ENCODE measurements at regions of chr7 and their contacts with region 1.

Region 1: GRCh38 chr7:130486114-130486958 is 5.5 kb upstream of the MEST start:
- DNase-seq: peak; percentile 34 to 73 (median 56)
- ATAC-seq: peak; percentile 88
- H3K4me3 ChIP-seq: peak overlapping the region; percentile 80
- H3K4me3 Mint-ChIP-seq: peak overlapping the region; percentile 85 to 94 (median 91)
- H3K27ac ChIP-seq: peak overlapping the region; percentile 41
- H3K27ac Mint-ChIP-seq: peak overlapping the region in 5 of 9 donors; percentile 58 to 88 (median 73)
- H3K4me1 ChIP-seq: peaks cover 7 to 9% of the 10 kb centered on the region in 2 donors
- H3K4me1 Mint-ChIP-seq: peaks cover 22 to 32% (median 25%) of the 10 kb centered on the region in 7 donors
- H3K27me3 ChIP-seq: no peaks in the 10 kb centered on the region
- H3K27me3 Mint-ChIP-seq: peaks cover 5 to 66% (median 31%) of the 10 kb centered on the region in 5 donors

Region 2: DNA sequence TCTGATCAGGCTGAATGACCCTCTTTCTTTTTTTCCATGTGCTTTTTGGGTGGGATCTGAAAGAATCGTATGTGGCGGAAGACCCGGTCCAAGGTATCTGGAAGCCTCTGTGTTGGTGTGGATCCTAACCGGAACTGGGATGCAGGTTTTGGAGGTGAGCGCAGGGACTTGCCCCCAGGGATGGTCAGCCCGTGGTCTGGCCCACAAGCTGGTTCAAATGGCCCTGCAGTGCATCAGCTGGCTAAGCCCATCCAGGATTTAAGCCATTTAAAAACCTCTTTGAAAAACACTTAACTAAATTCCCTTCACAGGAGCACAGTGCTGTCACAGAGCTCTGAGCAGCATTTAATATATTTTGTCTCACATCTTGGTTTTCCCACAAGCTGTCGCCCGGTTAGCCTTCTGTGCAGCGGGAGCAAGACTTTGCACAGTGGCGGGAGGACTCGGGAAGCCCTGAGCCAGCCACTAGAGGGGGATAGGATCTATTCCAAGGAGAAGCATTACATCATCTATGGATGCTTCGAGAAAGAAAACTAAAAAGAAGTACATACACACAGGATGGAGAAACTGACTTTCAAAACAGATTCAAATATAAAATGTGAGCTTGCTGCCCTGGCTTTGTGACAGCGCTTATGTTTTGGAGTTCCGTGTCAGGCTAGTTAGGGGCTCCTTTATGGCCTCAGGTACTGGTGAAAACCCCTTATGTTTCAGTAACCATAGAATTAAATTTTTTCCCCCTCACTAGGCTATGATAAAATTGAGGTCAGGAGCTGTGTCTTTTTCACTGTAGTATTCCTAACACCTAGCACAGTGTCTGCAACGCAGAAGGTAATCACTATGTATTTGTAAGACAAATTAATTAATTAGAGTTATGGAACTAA is 208.3 kb before region 1 on chr7:
- CTCF ChIA-PET with region 1: no interaction called
- POLR2A ChIA-PET with region 1: no interaction called
- intact Hi-C with region 1: no loop called
- DNase-seq: no peak
- ATAC-seq: no peak
- H3K4me3 ChIP-seq: no peak overlapping the region
- H3K4me3 Mint-ChIP-seq: no peak overlapping the region
- H3K27ac ChIP-seq: no peak overlapping the region
- H3K27ac Mint-ChIP-seq: peak overlapping the region in 1 of 9 donors; percentile 56
- H3K4me1 ChIP-seq: peaks cover 0 to 5% of the 10 kb centered on the region in 2 donors
- H3K4me1 Mint-ChIP-seq: peaks cover 0 to 24% (median 12%) of the 10 kb centered on the region in 7 donors
- H3K27me3 ChIP-seq: no peaks in the 10 kb centered on the region
- H3K27me3 Mint-ChIP-seq: peaks cover 0 to 6% (median 0%) of the 10 kb centered on the region in 5 donors

Region 3: GRCh38 chr7:130421684-130422083 is 64.7 kb before region 1 on chr7:
- CTCF ChIA-PET with region 1: no interaction called
- POLR2A ChIA-PET with region 1: no interaction called
- intact Hi-C with region 1: loop called (anchors 2 to 10 kb)
- DNase-seq: no peak
- ATAC-seq: no peak
- H3K4me3 ChIP-seq: no peak overlapping the region
- H3K4me3 Mint-ChIP-seq: peak overlapping the region in 9 of 10 donors; percentile 10 to 75 (median 64)
- H3K27ac ChIP-seq: peak overlapping the region; percentile 23
- H3K27ac Mint-ChIP-seq: peak overlapping the region; percentile 6 to 94 (median 68)
- H3K4me1 ChIP-seq: peaks cover 0 to 68% of the 10 kb centered on the region in 2 donors
- H3K4me1 Mint-ChIP-seq: peaks cover 32 to 88% (median 85%) of the 10 kb centered on the region in 7 donors
- H3K27me3 ChIP-seq: no peaks in the 10 kb centered on the region
- H3K27me3 Mint-ChIP-seq: no peaks in the 10 kb centered on the region

Region 4: DNA sequence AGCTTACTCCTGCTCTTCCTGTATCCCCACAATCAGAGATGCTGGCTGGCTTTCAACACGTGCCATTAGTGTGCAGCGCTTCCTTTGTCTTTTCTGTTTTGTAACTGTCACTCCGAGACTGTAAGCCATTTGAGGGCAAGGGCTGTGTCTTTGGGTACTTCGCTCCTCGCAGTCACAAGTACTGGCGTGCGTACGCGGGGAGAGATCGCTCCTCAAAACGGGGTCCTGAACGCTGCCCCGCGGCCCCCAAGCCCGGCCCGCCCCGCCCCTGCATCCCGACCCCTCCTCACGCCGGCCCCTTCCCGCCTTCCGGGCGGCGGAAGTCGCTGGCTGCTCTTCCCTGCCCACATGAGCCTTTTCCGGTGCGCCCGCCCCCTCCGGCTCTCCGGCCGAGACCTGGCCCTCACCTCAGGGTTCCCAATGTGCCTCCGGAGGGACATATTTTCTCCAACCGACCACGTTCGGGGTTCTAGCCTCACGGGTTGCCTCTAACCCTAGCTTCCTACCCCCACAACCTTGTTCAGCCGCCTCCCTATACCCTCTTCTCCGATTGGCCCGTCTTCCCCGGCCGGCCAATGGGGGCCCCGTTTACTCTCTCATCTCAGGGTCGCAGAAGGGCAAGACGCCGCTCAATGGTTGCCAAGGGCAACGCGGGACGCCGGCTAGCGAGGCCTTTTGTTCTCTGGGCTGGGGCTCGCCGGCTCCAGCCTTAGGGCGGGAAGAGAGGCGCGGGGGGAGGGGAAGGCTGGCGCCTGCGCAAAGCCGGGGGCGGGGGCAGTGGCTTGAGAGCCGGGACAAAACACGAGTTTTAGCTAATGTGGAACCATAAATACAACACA is 45.6 kb before region 1 on chr7 and contains the start of gene CEP41:
- CTCF ChIA-PET with region 1: no interaction called
- POLR2A ChIA-PET with region 1: no interaction called
- intact Hi-C with region 1: loop called in 1 of 2 experiments (anchors 5 kb)
- DNase-seq: peak; percentile 85 to 90 (median 89)
- ATAC-seq: peak; percentile 98
- H3K4me3 ChIP-seq: peak within 1 kb of the TSS; percentile 87
- H3K4me3 Mint-ChIP-seq: peak within 1 kb of the TSS; percentile 95 to 100 (median 98)
- H3K27ac ChIP-seq: peak within 1 kb of the TSS; percentile 76
- H3K27ac Mint-ChIP-seq: peak within 1 kb of the TSS; percentile 95 to 99 (median 96)
- H3K4me1 ChIP-seq: peaks cover 4 to 26% of the 10 kb centered on the region in 2 donors
- H3K4me1 Mint-ChIP-seq: peaks cover 26 to 71% (median 59%) of the 10 kb centered on the region in 7 donors
- H3K27me3 ChIP-seq: no peaks in the 10 kb centered on the region
- H3K27me3 Mint-ChIP-seq: peaks cover 0 to 4% (median 0%) of the 10 kb centered on the region in 5 donors
- total RNA-seq, gene CEP41: 6.9 to 16.0 (median 12.6) TPM

Region 5: GRCh38 chr7:130529417-130529816 is 43.1 kb after region 1 on chr7:
- CTCF ChIA-PET with region 1: no interaction called
- POLR2A ChIA-PET with region 1: no interaction called
- intact Hi-C with region 1: no loop called
- DNase-seq: no peak
- ATAC-seq: no peak
- H3K4me3 ChIP-seq: no peak overlapping the region
- H3K4me3 Mint-ChIP-seq: no peak overlapping the region
- H3K27ac ChIP-seq: no peak overlapping the region
- H3K27ac Mint-ChIP-seq: peak overlapping the region in 1 of 9 donors; percentile 30
- H3K4me1 ChIP-seq: no peaks in the 10 kb centered on the region
- H3K4me1 Mint-ChIP-seq: peaks cover 0 to 4% (median 0%) of the 10 kb centered on the region in 7 donors
- H3K27me3 ChIP-seq: no peaks in the 10 kb centered on the region
- H3K27me3 Mint-ChIP-seq: no peaks in the 10 kb centered on the region

Region 6: DNA sequence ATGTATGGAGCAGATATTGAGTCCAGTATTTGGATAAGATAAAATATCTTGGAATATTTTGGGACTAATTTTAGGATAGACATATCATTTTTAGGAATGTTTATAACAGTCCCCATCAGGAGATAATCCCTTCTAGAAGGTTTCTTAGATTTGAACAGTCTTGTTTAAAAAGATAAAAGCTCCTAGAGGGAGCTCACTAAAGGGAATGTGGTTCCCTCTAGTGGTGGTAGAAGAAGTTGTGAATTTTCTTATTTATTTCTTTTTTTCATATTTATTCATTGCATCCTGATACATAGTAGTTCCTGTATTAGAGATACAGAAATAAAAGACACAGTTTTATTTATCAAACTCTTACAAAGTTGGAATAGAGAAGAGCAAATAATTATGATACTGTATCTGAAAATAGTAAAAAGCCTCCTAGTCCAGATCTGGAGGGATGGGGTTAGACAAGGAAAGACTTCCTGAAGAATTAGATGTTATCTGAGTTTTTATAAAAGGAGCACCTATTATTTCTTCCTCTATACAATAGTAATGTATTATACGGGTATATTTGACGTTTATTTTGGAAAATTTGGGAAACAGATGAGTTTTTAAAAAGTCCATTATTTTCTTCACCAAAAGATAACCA is 272.2 kb after region 1 on chr7:
- CTCF ChIA-PET with region 1: interaction called, 3 read pairs
- POLR2A ChIA-PET with region 1: no interaction called
- intact Hi-C with region 1: loop called (anchors 5 to 10 kb)
- DNase-seq: peak in 6 of 9 donors; percentile 27 to 53 (median 43)
- ATAC-seq: peak; percentile 66
- H3K4me3 ChIP-seq: no peak overlapping the region
- H3K4me3 Mint-ChIP-seq: no peak overlapping the region
- H3K27ac ChIP-seq: no peak overlapping the region
- H3K27ac Mint-ChIP-seq: no peak overlapping the region
- H3K4me1 ChIP-seq: no peaks in the 10 kb centered on the region
- H3K4me1 Mint-ChIP-seq: peaks cover 0 to 2% (median 0%) of the 10 kb centered on the region in 7 donors
- H3K27me3 ChIP-seq: no peaks in the 10 kb centered on the region
- H3K27me3 Mint-ChIP-seq: peaks cover 0 to 13% (median 4%) of the 10 kb centered on the region in 5 donors

Measured in naive thymus-derived CD4-positive, alpha-beta T cell (primary cell).